Right ventricle myocardium inferior (tissue), 1 donor: ENCODE measurements at regions of chr11 and their contacts with region 1.

Region 1: GRCh38 chr11:122101625-122102291 is 14.3 kb downstream of the BLID start:
- DNase-seq: peak; percentile 71
- ATAC-seq: peak; percentile 91

Region 2: GRCh38 chr11:121790430-121790829 is 311.3 kb before region 1 on chr11:
- intact Hi-C with region 1: no loop called
- DNase-seq: no peak
- ATAC-seq: no peak

Region 3: GRCh38 chr11:122068141-122068540 is 33.6 kb before region 1 on chr11:
- intact Hi-C with region 1: no loop called
- DNase-seq: no peak
- ATAC-seq: no peak

Region 4: GRCh38 chr11:122202951-122203456 is 101.2 kb after region 1 on chr11:
- intact Hi-C with region 1: loop called (anchors 2 kb)
- DNase-seq: peak; percentile 86
- ATAC-seq: peak; percentile 89